ENCODE measurements at regions of chr5 and their contacts with region 1.

Region 1: GRCh38 chr5:82225525-82226172 is 52.5 kb downstream of the RPS23 start:
- DNase-seq: peak; percentile 45
- H3K4me3 Mint-ChIP-seq: no peak overlapping the region
- H3K27ac Mint-ChIP-seq: no peak overlapping the region
- H3K4me1 Mint-ChIP-seq: peaks cover 7% of the 10 kb centered on the region
- H3K27me3 Mint-ChIP-seq: no peaks in the 10 kb centered on the region

Region 2: DNA sequence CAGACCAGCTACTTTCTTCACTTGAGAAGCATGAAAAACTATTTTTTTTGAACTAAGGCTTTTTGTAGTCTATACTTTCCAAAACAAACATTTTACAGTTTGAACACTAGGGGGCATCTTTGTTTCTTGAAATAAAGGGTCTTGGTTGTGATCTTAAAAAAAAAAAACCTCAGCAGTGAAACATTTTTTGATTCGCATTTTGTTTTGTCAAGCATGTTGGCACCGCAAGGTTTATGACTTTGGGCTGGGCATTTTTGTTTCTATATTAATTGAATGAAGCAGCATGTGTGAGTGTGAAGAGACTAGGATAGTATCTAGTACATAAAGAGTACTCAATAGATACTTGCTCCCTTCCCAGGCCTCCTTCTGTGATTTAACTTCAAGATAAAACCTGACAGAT is 800.1 kb before region 1 on chr5:
- intact Hi-C with region 1: loop called (anchors 2 kb)
- DNase-seq: no peak
- H3K4me3 Mint-ChIP-seq: no peak overlapping the region
- H3K27ac Mint-ChIP-seq: no peak overlapping the region
- H3K4me1 Mint-ChIP-seq: peaks cover 35% of the 10 kb centered on the region
- H3K27me3 Mint-ChIP-seq: no peaks in the 10 kb centered on the region

Region 3: GRCh38 chr5:81851481-81852178 is 374.0 kb before region 1 on chr5:
- intact Hi-C with region 1: loop called (anchors 10 kb)
- DNase-seq: peak; percentile 88
- H3K4me3 Mint-ChIP-seq: peak overlapping the region; percentile 85
- H3K27ac Mint-ChIP-seq: peak overlapping the region; percentile 94
- H3K4me1 Mint-ChIP-seq: peaks cover 38% of the 10 kb centered on the region
- H3K27me3 Mint-ChIP-seq: no peaks in the 10 kb centered on the region

Region 4: GRCh38 chr5:82107267-82107666 is 118.4 kb before region 1 on chr5:
- intact Hi-C with region 1: loop called (anchors 10 kb)
- DNase-seq: no peak
- H3K4me3 Mint-ChIP-seq: no peak overlapping the region
- H3K27ac Mint-ChIP-seq: no peak overlapping the region
- H3K4me1 Mint-ChIP-seq: peaks cover 22% of the 10 kb centered on the region
- H3K27me3 Mint-ChIP-seq: no peaks in the 10 kb centered on the region

Region 5: DNA sequence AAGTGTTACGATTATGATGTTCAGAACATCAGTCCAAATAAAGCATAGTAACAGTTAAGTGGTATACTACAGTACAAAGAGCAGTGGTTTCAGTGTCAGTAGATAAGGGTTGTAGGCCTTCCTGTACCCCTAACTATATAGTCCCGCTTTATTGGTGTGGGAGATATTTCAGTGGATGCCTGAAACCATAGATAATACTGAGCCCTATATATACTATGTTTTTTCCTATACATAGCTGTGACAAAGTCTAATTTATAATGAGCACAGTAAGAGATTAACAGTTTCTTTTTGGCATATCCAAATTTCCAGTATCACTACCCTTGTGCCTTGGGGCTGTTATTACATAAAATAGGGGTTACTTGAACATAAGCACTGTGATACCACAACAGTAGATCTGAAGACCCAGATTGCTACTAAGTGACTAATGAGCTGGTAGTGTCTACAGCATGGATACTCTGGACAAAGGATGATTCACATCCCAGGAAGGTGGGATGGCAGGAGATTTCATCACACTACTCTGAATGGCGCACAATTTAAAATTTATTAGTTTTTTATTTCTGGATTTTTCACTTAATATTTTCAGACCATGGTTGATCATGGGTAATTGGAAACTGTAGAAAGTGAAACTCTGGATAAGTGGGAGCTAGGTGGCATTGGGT is 66.8 kb before region 1 on chr5:
- intact Hi-C with region 1: no loop called
- DNase-seq: no peak
- H3K4me3 Mint-ChIP-seq: no peak overlapping the region
- H3K27ac Mint-ChIP-seq: no peak overlapping the region
- H3K4me1 Mint-ChIP-seq: peaks cover 9% of the 10 kb centered on the region
- H3K27me3 Mint-ChIP-seq: no peaks in the 10 kb centered on the region

Region 6: DNA sequence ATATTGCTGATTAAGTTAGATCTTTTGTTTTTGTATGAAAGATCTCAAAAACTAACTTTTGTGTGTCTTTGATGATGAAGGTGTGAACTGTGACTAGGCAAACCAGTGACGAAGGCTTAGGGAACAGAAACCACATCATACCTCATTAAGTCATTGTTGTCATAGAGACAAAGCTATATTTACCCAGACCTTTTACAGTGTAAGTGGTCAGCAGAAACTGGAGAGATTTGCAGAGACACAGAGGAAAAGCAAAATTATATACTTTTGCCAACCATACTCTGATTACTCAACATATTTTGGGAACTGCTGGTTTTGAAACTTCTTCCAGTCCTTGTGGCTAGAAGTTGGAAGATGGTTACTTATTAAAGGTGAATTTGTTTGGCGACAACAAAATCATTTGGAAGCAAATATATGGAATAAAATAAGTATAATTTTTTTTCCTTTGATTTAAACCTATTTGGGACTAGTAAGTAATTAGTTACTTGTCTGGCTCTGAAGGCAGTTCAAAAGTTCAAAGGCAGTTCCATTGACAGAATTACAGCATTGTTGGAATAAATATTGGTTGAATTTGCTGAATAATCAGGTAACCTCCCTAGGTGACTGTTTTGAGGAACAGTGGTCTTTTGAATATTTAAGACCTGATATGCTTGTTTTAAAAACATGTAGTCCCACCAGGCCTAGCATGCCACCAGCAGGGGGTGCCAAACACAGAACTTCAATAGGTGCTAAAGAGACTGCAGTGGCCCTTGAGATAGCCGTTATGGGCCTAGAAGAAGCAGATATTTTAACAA is 51.3 kb before region 1 on chr5:
- intact Hi-C with region 1: loop called (anchors 2 kb)
- DNase-seq: peak; percentile 33
- H3K4me3 Mint-ChIP-seq: no peak overlapping the region
- H3K27ac Mint-ChIP-seq: no peak overlapping the region
- H3K4me1 Mint-ChIP-seq: peaks cover 4% of the 10 kb centered on the region
- H3K27me3 Mint-ChIP-seq: no peaks in the 10 kb centered on the region

Measured in activated T-helper 2 cell treated with anti-CD3 and anti-CD28 coated beads, Interferon-gamma antibody, Interleukin-2, Interleukin-4, amounts not matched to agents 10 μg/mL and 5 μg/mL and 100 μg/mL, durations not matched to agents 14 hours and 24 hours and 36 hours (primary cell).